ENCODE measurements at regions of chr2 and their contacts with region 1.

Region 1: GRCh38 chr2:26745609-26746327 is 18.3 kb upstream of the SLC35F6 start:
- DNase-seq: peak; percentile 78
- ATAC-seq: peak; percentile 90
- H3K4me3 ChIP-seq: no peak overlapping the region
- H3K27ac ChIP-seq: no peak overlapping the region
- H3K4me1 ChIP-seq: peaks cover 2% of the 10 kb centered on the region
- H3K27me3 ChIP-seq: peaks cover 5% of the 10 kb centered on the region; the same call in 1 of the 2 replicates
- CTCF ChIP-seq: peak; percentile 96
- POLR2A ChIP-seq: no peak
- RAD21 ChIP-seq: peak; percentile 95

Region 2: GRCh38 chr2:26577434-26578112 is 168.2 kb before region 1 on chr2:
- CTCF ChIA-PET with region 1: interaction called, 5 read pairs
- POLR2A ChIA-PET with region 1: no interaction called
- dilution Hi-C with region 1: no loop called
- in situ Hi-C with region 1: no loop called
- intact Hi-C with region 1: loop called (anchors 1 kb)
- DNase-seq: peak; percentile 49
- ATAC-seq: peak; percentile 99
- H3K4me3 ChIP-seq: no peak overlapping the region
- H3K27ac ChIP-seq: no peak overlapping the region
- H3K4me1 ChIP-seq: no peaks in the 10 kb centered on the region
- H3K27me3 ChIP-seq: peaks cover 69% of the 10 kb centered on the region
- CTCF ChIP-seq: peak; percentile 91
- POLR2A ChIP-seq: no peak
- RAD21 ChIP-seq: peak; percentile 85

Region 3: GRCh38 chr2:26605195-26605998 is 140.4 kb before region 1 on chr2:
- CTCF ChIA-PET with region 1: interaction called, 33 read pairs
- POLR2A ChIA-PET with region 1: interaction called, 3 read pairs
- dilution Hi-C with region 1: no loop called
- in situ Hi-C with region 1: loop called (anchors 5 kb)
- intact Hi-C with region 1: loop called (anchors 1 kb)
- DNase-seq: peak; percentile 48
- ATAC-seq: peak; percentile 72
- H3K4me3 ChIP-seq: no peak overlapping the region
- H3K27ac ChIP-seq: no peak overlapping the region
- H3K4me1 ChIP-seq: no peaks in the 10 kb centered on the region
- H3K27me3 ChIP-seq: peaks cover 41% of the 10 kb centered on the region
- CTCF ChIP-seq: peak; percentile 75
- POLR2A ChIP-seq: no peak
- RAD21 ChIP-seq: peak; percentile 84